Activated CD8-positive, alpha-beta T cell treated with anti-CD3 and anti-CD28 coated beads for 36 hours (primary cell): ENCODE measurements at regions of chr16 and their contacts with region 1.

Region 1: GRCh38 chr16:50065624-50066481 is at the start of gene HEATR3:
- DNase-seq: peak; percentile 95
- ATAC-seq: peak; percentile 84
- H3K4me3 Mint-ChIP-seq: peak within 1 kb of the TSS; percentile 84
- H3K27ac Mint-ChIP-seq: peak within 1 kb of the TSS; percentile 91
- H3K4me1 Mint-ChIP-seq: peaks cover 32% of the 10 kb centered on the region
- H3K27me3 Mint-ChIP-seq: no peaks in the 10 kb centered on the region
- CTCF ChIP-seq: no peak
- total RNA-seq, gene HEATR3: 23.6 to 29.6 TPM

Region 2: GRCh38 chr16:49834531-49835151 is 231.2 kb before region 1 on chr16:
- CTCF ChIA-PET with region 1: no interaction called
- POLR2A ChIA-PET with region 1: no interaction called
- intact Hi-C with region 1: no loop called
- DNase-seq: no peak
- ATAC-seq: no peak
- H3K4me3 Mint-ChIP-seq: no peak overlapping the region
- H3K27ac Mint-ChIP-seq: no peak overlapping the region
- H3K4me1 Mint-ChIP-seq: no peaks in the 10 kb centered on the region
- H3K27me3 Mint-ChIP-seq: peaks cover 13% of the 10 kb centered on the region
- CTCF ChIP-seq: no peak

Region 3: GRCh38 chr16:49876716-49877129 is 189.1 kb before region 1 on chr16:
- CTCF ChIA-PET with region 1: no interaction called
- POLR2A ChIA-PET with region 1: no interaction called
- intact Hi-C with region 1: no loop called
- DNase-seq: peak; percentile 48
- ATAC-seq: peak; percentile 78
- H3K4me3 Mint-ChIP-seq: no peak overlapping the region
- H3K27ac Mint-ChIP-seq: no peak overlapping the region
- H3K4me1 Mint-ChIP-seq: no peaks in the 10 kb centered on the region
- H3K27me3 Mint-ChIP-seq: peaks cover 31% of the 10 kb centered on the region
- CTCF ChIP-seq: peak; percentile 84

Region 4: GRCh38 chr16:50037662-50038220 is 28.1 kb before region 1 on chr16:
- CTCF ChIA-PET with region 1: no interaction called
- POLR2A ChIA-PET with region 1: no interaction called
- intact Hi-C with region 1: no loop called
- DNase-seq: no peak
- ATAC-seq: no peak
- H3K4me3 Mint-ChIP-seq: no peak overlapping the region
- H3K27ac Mint-ChIP-seq: no peak overlapping the region
- H3K4me1 Mint-ChIP-seq: peaks cover 7% of the 10 kb centered on the region
- H3K27me3 Mint-ChIP-seq: no peaks in the 10 kb centered on the region
- CTCF ChIP-seq: no peak

Region 5: DNA sequence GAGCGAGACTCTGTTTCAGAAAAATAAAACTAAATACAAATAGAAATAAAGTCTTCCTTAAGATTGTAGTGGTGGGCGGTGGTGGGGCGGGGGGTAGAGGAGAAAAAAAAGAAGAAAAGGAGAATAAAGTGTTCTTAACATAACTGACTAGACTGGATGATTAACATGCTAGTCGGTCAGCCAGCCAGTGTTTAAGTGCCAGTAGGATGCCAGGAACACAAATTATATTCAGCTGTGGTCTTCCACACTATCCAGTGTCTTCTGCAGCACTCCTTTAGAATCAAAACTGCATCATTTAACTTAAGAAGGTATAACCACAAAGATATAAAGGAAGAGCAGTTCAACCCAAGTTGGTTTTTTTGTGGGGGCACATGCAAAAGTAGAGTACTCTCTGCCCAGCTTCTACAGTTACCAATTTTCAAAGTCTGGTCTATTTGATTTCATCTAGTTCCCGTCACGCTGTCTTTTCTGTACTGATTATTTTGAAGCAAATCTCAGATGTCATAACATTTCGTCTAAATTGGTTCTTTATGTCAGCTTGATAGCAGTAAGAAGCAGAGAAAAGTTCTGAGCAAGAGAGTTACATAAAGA is 15.7 kb after region 1 on chr16:
- CTCF ChIA-PET with region 1: interaction called, 11 read pairs
- POLR2A ChIA-PET with region 1: interaction called, 4 read pairs
- intact Hi-C with region 1: no loop called
- DNase-seq: no peak
- ATAC-seq: no peak
- H3K4me3 Mint-ChIP-seq: no peak overlapping the region
- H3K27ac Mint-ChIP-seq: peak overlapping the region; percentile 24
- H3K4me1 Mint-ChIP-seq: peaks cover 22% of the 10 kb centered on the region
- H3K27me3 Mint-ChIP-seq: no peaks in the 10 kb centered on the region
- CTCF ChIP-seq: no peak

Region 6: DNA sequence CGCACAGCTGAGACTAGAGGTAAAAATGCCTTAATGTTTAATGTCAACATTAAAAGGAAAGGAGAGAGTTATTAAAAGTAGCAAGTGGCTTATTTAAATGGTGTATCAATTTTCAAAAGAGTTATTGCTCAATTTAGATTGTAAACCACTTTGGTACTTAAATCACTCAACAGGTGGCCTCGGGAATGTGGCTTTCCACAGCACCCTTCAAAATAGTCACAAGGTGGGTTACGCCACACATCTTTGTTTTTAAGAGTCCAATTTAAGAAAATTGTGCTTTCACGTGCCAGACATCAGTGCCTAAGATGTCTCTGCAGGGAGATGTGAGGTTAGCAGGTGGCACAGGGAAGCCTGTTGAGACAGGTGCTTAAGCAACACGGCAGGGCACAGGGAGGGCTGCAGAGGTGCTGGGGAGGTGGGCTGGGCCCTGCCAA is 173.0 kb after region 1 on chr16:
- CTCF ChIA-PET with region 1: no interaction called
- POLR2A ChIA-PET with region 1: no interaction called
- intact Hi-C with region 1: no loop called
- DNase-seq: no peak
- ATAC-seq: no peak
- H3K4me3 Mint-ChIP-seq: no peak overlapping the region
- H3K27ac Mint-ChIP-seq: no peak overlapping the region
- H3K4me1 Mint-ChIP-seq: no peaks in the 10 kb centered on the region
- H3K27me3 Mint-ChIP-seq: no peaks in the 10 kb centered on the region
- CTCF ChIP-seq: no peak